PC-3 (cell line): ENCODE measurements at regions of chr2 and their contacts with region 1.

Region 1: DNA sequence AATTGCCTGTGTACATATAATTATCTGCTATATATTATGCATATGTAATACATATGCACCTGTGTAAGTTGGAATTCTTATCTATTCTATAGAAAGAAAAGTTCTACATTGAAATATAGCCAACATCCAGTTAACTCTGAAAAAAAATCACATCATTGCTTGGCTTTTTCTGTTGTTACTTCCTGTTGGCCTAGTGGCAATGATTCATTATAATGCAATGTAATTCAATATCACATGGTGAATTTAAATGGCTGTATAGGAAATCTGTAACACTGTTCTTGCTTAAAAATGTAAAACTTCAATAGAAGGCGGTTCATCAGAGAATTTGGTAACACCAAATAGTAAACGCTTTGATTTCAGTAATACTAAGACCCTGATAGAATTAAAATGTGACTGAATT is 44.5 kb upstream of the MAP4K3 start:
- DNase-seq: peak; percentile 75
- ATAC-seq: peak; percentile 84
- H3K4me3 ChIP-seq: no peak overlapping the region
- H3K27ac ChIP-seq: peak overlapping the region; percentile 46
- H3K4me1 ChIP-seq: peaks cover 17% of the 10 kb centered on the region
- H3K27me3 ChIP-seq: no peaks in the 10 kb centered on the region
- CTCF ChIP-seq: no peak

Region 2: GRCh38 chr2:39570614-39571013 is 89.0 kb after region 1 on chr2:
- CTCF ChIA-PET with region 1: no interaction called
- POLR2A ChIA-PET with region 1: interaction called, 30 read pairs
- intact Hi-C with region 1: no loop called
- DNase-seq: no peak
- ATAC-seq: no peak
- H3K4me3 ChIP-seq: no peak overlapping the region
- H3K27ac ChIP-seq: no peak overlapping the region
- H3K4me1 ChIP-seq: peaks cover 41% of the 10 kb centered on the region
- H3K27me3 ChIP-seq: no peaks in the 10 kb centered on the region
- CTCF ChIP-seq: no peak

Region 3: GRCh38 chr2:39632871-39633270 is 151.3 kb after region 1 on chr2:
- CTCF ChIA-PET with region 1: no interaction called
- POLR2A ChIA-PET with region 1: interaction called, 10 read pairs
- intact Hi-C with region 1: no loop called
- DNase-seq: peak; percentile 35
- ATAC-seq: no peak
- H3K4me3 ChIP-seq: no peak overlapping the region
- H3K27ac ChIP-seq: peak overlapping the region; percentile 72; the same call in 1 of the 2 replicates
- H3K4me1 ChIP-seq: peaks cover 40% of the 10 kb centered on the region
- H3K27me3 ChIP-seq: no peaks in the 10 kb centered on the region
- CTCF ChIP-seq: no peak